ENCODE measurements at regions of chr9 and their contacts with region 1.

Region 1: DNA sequence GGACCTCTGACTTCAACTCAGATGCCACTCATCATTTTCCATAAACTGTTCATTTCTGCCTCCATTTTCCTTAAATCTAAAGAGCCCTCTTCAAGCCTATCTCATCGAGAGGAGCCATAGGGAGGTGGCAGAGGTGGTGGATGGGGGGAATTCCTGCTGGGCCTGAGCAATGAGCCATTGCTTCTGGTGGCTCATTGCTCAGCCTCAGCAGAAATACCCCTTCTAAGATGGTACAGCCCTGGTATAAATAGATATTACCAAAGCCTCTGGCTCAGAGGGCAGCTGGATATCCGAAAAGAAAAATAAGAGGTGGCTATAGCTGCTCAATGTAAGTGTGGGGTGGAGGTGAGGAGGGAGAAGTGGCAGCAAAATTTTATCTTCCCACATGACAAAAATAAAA is 313.5 kb downstream of the CAAP1 start:
- DNase-seq: no peak
- H3K4me3 ChIP-seq: no peak overlapping the region
- H3K27ac ChIP-seq: no peak overlapping the region
- H3K4me1 ChIP-seq: no peaks in the 10 kb centered on the region
- H3K27me3 ChIP-seq: no peaks in the 10 kb centered on the region
- CTCF ChIP-seq: no peak

Region 2: DNA sequence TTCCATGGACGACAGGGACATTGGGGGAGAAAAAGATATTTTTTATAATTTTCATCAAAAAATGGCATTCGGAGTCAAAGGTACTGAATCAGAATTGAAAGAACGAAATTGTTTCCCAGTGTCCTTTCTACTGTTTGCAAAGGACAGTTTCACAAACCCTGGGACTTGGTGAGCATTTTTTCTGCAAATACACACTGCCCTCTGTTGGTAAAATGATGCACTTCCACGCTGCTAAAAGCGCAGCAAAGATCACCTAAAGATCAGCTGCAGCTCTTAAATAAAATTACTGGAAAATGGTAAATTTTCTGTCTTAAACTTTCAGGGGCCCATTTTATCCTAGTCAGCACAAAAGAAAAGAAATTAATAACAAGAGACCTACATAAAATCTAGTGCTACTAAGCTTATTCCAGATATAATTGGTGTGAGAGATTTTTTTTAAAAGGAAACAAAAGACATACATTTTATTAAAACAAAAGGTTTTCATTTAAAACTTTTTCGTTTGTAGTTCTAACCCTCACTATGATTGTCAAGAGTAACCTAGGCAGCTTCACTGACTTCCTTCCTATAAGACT is 252.5 kb before region 1 on chr9:
- intact Hi-C with region 1: no loop called
- DNase-seq: no peak
- H3K4me3 ChIP-seq: no peak overlapping the region
- H3K27ac ChIP-seq: no peak overlapping the region
- H3K4me1 ChIP-seq: no peaks in the 10 kb centered on the region
- H3K27me3 ChIP-seq: no peaks in the 10 kb centered on the region
- CTCF ChIP-seq: peak in 2 of 3 experiments; percentile 74 to 76

Region 3: GRCh38 chr9:26524267-26524666 is 54.8 kb before region 1 on chr9:
- intact Hi-C with region 1: loop called (anchors 10 kb)
- DNase-seq: peak in 1 of 2 donors; percentile 63
- H3K4me3 ChIP-seq: no peak overlapping the region
- H3K27ac ChIP-seq: no peak overlapping the region
- H3K4me1 ChIP-seq: peaks cover 0 to 11% of the 10 kb centered on the region in 2 donors
- H3K27me3 ChIP-seq: no peaks in the 10 kb centered on the region
- CTCF ChIP-seq: no peak

Measured in ascending aorta (tissue), 2 donors.